ENCODE measurements at regions of chrX and their contacts with region 1.

Region 1: GRCh38 chrX:70454441-70455365 is 10.1 kb downstream of the DLG3 start:
- DNase-seq: peak; percentile 88
- H3K4me3 ChIP-seq: peak overlapping the region; percentile 49
- H3K27ac ChIP-seq: peak overlapping the region; percentile 91
- H3K4me1 ChIP-seq: no peaks in the 10 kb centered on the region
- H3K27me3 ChIP-seq: no peaks in the 10 kb centered on the region
- CTCF ChIP-seq: peak; percentile 75

Region 2: GRCh38 chrX:70554081-70554480 is 99.4 kb after region 1 on chrX:
- intact Hi-C with region 1: loop called (anchors 5 kb)
- DNase-seq: no peak
- H3K4me3 ChIP-seq: no peak overlapping the region
- H3K27ac ChIP-seq: no peak overlapping the region
- H3K4me1 ChIP-seq: no peaks in the 10 kb centered on the region
- H3K27me3 ChIP-seq: no peaks in the 10 kb centered on the region
- CTCF ChIP-seq: no peak

Region 3: GRCh38 chrX:70664726-70665125 is 210.0 kb after region 1 on chrX:
- intact Hi-C with region 1: loop called (anchors 10 kb)
- DNase-seq: no peak
- H3K4me3 ChIP-seq: no peak overlapping the region
- H3K27ac ChIP-seq: no peak overlapping the region
- H3K4me1 ChIP-seq: no peaks in the 10 kb centered on the region
- H3K27me3 ChIP-seq: no peaks in the 10 kb centered on the region
- CTCF ChIP-seq: no peak